ENCODE measurements at regions of chr1 and their contacts with region 1.

Region 1: GRCh38 chr1:202184750-202185460 is 8.7 kb upstream of the LGR6 start:
- DNase-seq: peak; percentile 91
- H3K4me3 ChIP-seq: no peak overlapping the region
- H3K27ac ChIP-seq: no peak overlapping the region
- H3K4me1 ChIP-seq: peaks cover 0 to 14% (median 6%) of the 10 kb centered on the region in 6 donors
- H3K27me3 ChIP-seq: peaks cover 0 to 22% (median 0%) of the 10 kb centered on the region in 7 donors
- CTCF ChIP-seq: peak; percentile 23 to 91 (median 75)
- POLR2A ChIP-seq: no peak

Region 2: GRCh38 chr1:202274611-202275010 is 89.7 kb after region 1 on chr1:
- intact Hi-C with region 1: no loop called
- DNase-seq: peak; percentile 72
- H3K4me3 ChIP-seq: no peak overlapping the region
- H3K27ac ChIP-seq: no peak overlapping the region
- H3K4me1 ChIP-seq: no peaks in the 10 kb centered on the region
- H3K27me3 ChIP-seq: no peaks in the 10 kb centered on the region
- CTCF ChIP-seq: peak in 8 of 11 experiments; percentile 12 to 50 (median 36)
- POLR2A ChIP-seq: no peak

Region 3: DNA sequence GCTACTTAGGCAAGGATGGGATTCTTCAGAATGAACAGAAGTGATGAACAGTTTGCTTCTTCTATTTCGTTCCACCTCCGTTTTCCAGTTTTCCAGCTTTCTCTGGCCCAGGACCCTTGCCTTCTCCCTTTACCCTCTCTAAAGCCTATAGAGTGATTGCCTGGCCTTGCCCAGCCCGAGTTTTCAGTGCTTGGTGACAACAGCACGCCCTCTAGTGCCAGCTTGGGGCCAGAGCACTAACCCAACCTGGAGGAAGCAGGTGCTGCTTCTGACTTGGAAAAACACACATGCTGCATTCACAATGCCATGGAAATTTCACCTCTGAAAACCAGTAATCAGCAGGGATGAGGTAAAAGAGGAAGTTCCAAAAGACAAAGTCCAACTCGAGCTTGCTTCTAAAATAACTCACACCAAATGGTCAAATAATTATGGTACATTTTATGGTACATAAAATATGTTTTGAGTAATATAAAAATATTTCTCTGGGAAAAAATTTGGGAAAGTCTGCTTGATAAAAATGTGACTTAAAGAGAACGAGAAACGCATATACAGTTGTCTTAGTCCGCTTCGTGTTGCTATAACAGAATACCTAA is 130.8 kb after region 1 on chr1:
- intact Hi-C with region 1: loop called (anchors 2 kb)
- DNase-seq: peak; percentile 90
- H3K4me3 ChIP-seq: no peak overlapping the region
- H3K27ac ChIP-seq: no peak overlapping the region
- H3K4me1 ChIP-seq: peaks cover 4 to 15% (median 7%) of the 10 kb centered on the region in 6 donors
- H3K27me3 ChIP-seq: peaks cover 0 to 17% (median 0%) of the 10 kb centered on the region in 7 donors
- CTCF ChIP-seq: peak; percentile 68 to 93 (median 88)
- POLR2A ChIP-seq: no peak

Region 4: DNA sequence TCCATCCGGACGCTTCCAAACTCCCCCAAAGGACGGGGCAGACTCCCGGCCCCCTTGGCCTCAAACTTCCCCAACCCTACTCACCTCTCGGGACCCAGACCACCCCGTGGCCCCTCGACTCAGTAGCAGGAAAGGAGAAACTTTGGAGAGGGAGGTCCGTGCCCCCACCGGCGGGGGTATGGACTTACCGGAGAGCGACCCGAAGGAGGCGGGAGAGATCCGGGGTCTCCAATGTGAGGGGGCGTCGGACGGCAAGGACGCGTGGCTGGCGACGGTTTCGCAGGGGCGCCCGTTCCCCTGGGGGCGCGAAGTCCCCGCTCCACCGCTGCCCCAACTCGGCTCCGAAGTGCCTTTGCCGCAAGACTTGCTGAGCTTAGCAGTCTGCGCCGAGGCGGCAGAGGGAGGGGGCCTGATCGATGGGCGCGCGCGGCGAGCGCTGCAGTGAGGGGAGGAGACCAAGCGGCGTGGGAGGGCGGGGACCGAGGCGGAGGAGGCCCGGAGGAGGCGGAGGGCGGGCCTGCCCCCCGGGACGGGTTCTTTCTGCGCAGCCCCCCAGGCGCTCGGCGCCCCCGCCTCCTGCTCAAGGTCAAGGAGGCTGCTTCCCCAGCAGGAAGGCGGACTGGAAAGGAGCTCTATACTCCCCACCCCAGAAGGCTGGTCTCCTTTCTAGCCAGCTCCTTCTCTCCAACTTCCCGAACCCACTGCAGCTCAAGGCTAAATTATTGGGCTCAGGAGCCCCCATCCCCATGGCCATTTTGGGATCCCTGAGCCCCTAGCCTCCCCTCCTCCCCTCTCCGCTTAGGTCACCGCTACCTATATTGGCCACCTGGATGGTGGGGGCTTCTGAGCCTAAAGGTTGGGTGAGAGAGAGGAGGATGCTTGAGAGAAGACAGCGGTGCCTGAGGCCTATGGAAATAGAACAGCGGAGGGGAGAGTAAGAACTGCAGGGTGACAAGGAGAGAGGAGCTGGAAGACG is 525.5 kb after region 1 on chr1 and contains the start of gene SYT2:
- intact Hi-C with region 1: loop called (anchors 10 kb)
- DNase-seq: peak; percentile 75
- H3K4me3 ChIP-seq: peak within 1 kb of the TSS in 6 of 8 donors; percentile 4 to 50 (median 16)
- H3K27ac ChIP-seq: no peak within 1 kb of the TSS
- H3K4me1 ChIP-seq: peaks cover 5 to 17% (median 13%) of the 10 kb centered on the region in 6 donors
- H3K27me3 ChIP-seq: peaks cover 6 to 90% (median 46%) of the 10 kb centered on the region in 7 donors
- CTCF ChIP-seq: no peak
- POLR2A ChIP-seq: no peak
- total RNA-seq, gene SYT2: 0.03 to 0.14 (median 0.08) TPM in 4 of 7 donors, not detected in the others